Activated naive CD4-positive, alpha-beta T cell treated with anti-CD3 and anti-CD28 coated beads for 36 hours (primary cell): ENCODE measurements at regions of chrX and their contacts with region 1.

Region 1: GRCh38 chrX:109840585-109840984 is 107.5 kb upstream of the ACSL4 start:
- DNase-seq: peak; percentile 47
- H3K4me3 Mint-ChIP-seq: no peak overlapping the region
- H3K27ac Mint-ChIP-seq: no peak overlapping the region
- H3K4me1 Mint-ChIP-seq: peaks cover 17% of the 10 kb centered on the region
- H3K27me3 Mint-ChIP-seq: no peaks in the 10 kb centered on the region

Region 2: GRCh38 chrX:108091266-108091877 is 1749.2 kb before region 1 on chrX and contains the starts of genes ATG4A and PSMD10:
- CTCF ChIA-PET with region 1: no interaction called
- intact Hi-C with region 1: loop called (anchors 5 kb)
- DNase-seq: peak; percentile 94
- H3K4me3 Mint-ChIP-seq: no peak within 1 kb of the TSS
- H3K27ac Mint-ChIP-seq: no peak within 1 kb of the TSS
- H3K4me1 Mint-ChIP-seq: peaks cover 19% of the 10 kb centered on the region
- H3K27me3 Mint-ChIP-seq: no peaks in the 10 kb centered on the region
- total RNA-seq, gene ATG4A: 8.2 to 8.6 TPM
- total RNA-seq, gene PSMD10: 54.6 to 58.8 TPM

Region 3: DNA sequence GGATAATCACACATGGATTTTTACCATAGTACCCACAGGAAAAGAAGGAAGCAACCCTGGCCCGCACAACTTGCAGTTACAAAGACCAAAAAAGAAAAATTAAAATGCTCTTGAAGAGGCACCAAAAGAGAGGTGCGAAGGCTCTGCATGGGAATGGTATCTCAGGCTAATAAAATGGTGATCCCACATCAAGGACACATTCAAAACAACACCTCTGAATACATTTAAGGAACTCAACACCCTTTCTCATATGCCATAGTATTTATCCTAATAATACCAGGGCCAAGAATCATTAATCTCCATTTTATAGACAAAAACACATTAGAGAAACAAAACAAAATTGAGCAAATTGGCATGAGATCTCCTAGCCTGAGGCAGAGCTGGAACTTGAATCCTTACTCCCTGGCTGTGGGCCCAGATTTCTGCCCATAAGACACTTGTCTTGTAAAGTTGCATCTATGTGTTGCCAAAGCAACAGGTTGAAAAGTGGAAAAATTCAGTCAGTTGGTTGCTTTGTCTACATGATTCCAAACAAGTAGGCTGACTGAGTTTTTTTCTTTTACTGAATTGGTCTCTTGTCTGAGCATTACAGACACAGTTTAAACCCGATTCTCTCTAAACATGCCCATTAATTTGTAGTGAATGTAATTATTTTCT is 392.2 kb before region 1 on chrX:
- CTCF ChIA-PET with region 1: no interaction called
- intact Hi-C with region 1: no loop called
- DNase-seq: no peak
- H3K4me3 Mint-ChIP-seq: no peak overlapping the region
- H3K27ac Mint-ChIP-seq: no peak overlapping the region
- H3K4me1 Mint-ChIP-seq: no peaks in the 10 kb centered on the region
- H3K27me3 Mint-ChIP-seq: peaks cover 2% of the 10 kb centered on the region

Region 4: DNA sequence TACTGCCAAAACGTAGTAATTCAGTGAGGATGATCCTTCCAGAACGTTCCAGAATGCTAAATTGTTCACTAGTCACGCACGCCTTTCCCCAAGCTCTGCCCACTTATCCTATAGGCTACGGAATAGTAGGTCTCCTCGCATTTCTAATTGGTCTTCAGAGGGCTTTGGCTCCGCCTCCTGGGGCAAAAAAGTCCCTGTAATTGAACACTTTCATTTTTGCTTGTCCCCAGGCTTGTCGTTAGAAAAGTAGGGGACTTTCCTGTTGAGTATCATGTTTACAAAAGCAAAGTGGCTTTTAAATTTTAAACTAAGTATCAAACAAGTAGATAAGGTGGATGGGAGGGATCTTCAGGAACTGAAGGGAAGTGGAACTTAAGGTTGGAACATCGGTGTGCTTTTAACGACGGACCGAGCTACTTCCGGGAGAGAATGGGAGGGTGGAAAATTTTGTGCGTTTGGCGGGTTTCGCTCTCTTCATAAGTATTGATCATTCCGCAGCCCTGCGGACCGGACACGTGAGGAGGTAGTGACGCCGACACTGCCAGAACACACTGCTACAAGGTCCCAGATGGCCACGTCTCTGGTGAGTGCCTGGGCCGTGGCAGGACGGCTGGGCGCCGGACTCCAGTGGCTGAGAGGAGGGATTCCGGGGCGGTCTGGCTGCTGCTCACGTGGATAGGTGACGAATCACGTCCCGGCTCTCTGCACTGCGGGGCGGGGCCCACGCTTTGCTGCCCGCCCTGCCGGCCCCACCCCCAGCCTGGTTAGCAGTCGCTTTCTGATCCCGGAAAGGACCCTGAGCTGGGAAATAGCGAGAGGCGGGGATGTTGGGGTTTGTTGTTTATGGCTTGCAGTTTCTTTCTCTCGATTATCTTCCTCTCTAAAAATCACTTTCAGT is 303.9 kb before region 1 on chrX and contains the start of gene NXT2:
- CTCF ChIA-PET with region 1: no interaction called
- intact Hi-C with region 1: loop called (anchors 1 kb)
- DNase-seq: peak; percentile 89
- H3K4me3 Mint-ChIP-seq: peak within 1 kb of the TSS; percentile 95
- H3K27ac Mint-ChIP-seq: peak within 1 kb of the TSS; percentile 98
- H3K4me1 Mint-ChIP-seq: peaks cover 19% of the 10 kb centered on the region
- H3K27me3 Mint-ChIP-seq: no peaks in the 10 kb centered on the region
- total RNA-seq, gene NXT2: 14.8 to 14.9 TPM

Region 5: DNA sequence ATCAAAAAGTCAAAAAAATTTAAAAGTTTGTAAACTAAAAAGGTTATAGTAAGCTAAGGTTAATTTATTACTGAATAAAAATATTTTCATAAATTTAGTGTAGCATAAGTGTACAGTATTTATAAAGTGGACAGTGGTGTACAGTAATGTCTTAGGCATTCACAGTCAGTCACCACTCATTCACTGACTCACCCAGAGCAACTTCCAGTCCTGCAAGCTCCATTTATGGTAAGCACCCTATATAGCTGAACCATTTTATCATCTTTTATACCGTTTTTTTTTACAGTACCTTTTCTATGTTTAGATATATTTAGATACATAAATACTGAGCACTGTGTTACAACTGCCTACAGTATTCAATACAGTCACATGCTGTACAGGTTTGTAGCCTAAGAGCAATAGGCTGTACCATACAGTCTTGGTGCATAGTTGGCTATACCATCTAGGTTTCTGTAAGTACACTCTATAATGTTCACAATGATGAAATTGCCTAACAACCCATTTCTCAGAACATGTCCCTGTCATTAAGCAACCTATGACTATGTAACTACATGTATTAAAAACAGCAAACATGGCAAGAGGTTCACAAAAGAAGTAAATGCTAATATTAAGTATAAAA is 126.1 kb before region 1 on chrX:
- CTCF ChIA-PET with region 1: interaction called, 7 read pairs
- intact Hi-C with region 1: loop called (anchors 5 kb)
- DNase-seq: no peak
- H3K4me3 Mint-ChIP-seq: no peak overlapping the region
- H3K27ac Mint-ChIP-seq: no peak overlapping the region
- H3K4me1 Mint-ChIP-seq: peaks cover 46% of the 10 kb centered on the region
- H3K27me3 Mint-ChIP-seq: no peaks in the 10 kb centered on the region

Region 6: DNA sequence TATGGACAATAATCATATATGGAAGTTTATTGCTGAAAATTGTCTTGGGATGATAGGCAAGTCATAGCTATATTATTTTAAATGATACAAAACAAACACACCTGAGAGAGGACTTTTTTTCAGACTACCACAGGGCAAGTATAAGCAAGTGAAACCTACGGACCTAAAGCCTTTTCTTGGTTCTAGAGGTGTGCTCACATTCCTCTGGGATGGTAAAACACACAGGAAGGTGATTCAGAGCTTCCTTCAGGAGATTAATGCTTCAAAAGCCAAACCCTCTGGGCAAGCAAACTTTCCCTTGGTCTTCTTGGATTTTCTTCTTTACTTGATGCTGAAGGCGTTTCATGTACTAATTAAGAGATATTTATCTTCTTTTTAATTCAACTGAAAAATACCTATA is 47.4 kb before region 1 on chrX:
- CTCF ChIA-PET with region 1: no interaction called
- intact Hi-C with region 1: no loop called
- DNase-seq: no peak
- H3K4me3 Mint-ChIP-seq: no peak overlapping the region
- H3K27ac Mint-ChIP-seq: no peak overlapping the region
- H3K4me1 Mint-ChIP-seq: no peaks in the 10 kb centered on the region
- H3K27me3 Mint-ChIP-seq: no peaks in the 10 kb centered on the region

Region 7: DNA sequence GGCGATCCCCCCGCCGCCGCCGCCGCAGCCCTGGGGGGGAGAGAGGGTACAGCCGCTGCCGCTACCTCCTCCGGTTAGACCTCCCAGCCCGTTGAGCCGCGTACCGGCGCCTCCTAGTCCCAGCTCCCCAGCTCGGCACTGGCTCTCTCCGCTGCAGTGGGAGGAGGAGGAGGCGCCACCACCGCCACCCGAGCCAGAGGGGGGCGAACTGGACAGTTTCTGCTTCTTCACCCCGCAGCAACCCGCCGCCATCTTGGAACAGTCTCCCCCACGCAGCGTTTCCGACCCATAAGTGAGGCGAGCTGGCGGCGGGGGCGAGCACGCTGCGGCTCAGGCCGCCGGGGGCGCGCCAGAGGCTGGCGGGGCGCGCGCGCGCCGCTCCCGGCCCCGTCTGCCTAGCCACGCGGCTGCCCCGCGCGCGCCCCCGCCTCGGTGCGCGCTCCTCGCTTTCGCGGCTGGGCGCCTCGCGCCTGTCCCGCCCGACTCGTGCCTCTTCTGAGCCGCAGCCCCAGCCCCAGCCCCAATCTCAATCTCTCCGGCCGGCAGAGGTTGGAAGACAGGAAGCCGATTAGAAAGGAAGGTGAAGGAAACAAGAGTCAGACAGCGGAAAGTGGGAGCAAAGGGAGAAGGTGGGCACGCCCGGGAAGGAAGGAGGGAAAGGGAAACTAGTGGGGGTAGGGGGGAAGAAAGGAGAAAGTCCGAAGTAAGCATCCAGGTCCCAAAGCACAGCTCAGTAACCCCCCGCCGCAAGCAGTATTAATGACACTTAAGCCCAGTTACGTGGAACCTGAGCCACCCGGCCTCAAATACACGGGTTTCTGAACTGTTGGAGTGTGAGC is 477.5 kb after region 1 on chrX and contains the start of gene AMMECR1:
- CTCF ChIA-PET with region 1: no interaction called
- intact Hi-C with region 1: loop called (anchors 10 kb)
- DNase-seq: peak; percentile 79
- H3K4me3 Mint-ChIP-seq: peak within 1 kb of the TSS; percentile 91
- H3K27ac Mint-ChIP-seq: peak within 1 kb of the TSS; percentile 94
- H3K4me1 Mint-ChIP-seq: peaks cover 21% of the 10 kb centered on the region
- H3K27me3 Mint-ChIP-seq: no peaks in the 10 kb centered on the region
- total RNA-seq, gene AMMECR1: 3.7 to 4.1 TPM